Posterior cingulate gyrus (tissue), 11 donors: ENCODE measurements at regions of chr12 and their contacts with region 1.

Region 1: GRCh38 chr12:123533672-123534643 is at the start of gene RILPL1:
- DNase-seq: peak; percentile 40 to 93 (median 52)

Region 2: GRCh38 chr12:123388177-123388947 is 145.6 kb before region 1 on chr12:
- intact Hi-C with region 1: loop called (anchors 10 kb)
- DNase-seq: peak; percentile 67 to 96 (median 76)

Region 3: GRCh38 chr12:123478762-123479161 is 55.2 kb before region 1 on chr12:
- intact Hi-C with region 1: loop called (anchors 2 kb)
- DNase-seq: peak; percentile 60 to 96 (median 79)